ENCODE measurements at regions of chr1 and their contacts with region 1.

Region 1: GRCh38 chr1:151399890-151400495 is 620 bp downstream of the PSMB4 start:
- DNase-seq: no peak
- H3K4me3 ChIP-seq: peak overlapping the region; percentile 74 to 84 (median 82)
- H3K27ac ChIP-seq: peak overlapping the region; percentile 89 to 92 (median 90)
- H3K4me1 ChIP-seq: peaks cover 0 to 18% (median 12%) of the 10 kb centered on the region in 4 donors
- H3K27me3 ChIP-seq: no peaks in the 10 kb centered on the region
- CTCF ChIP-seq: no peak
- EP300 ChIP-seq: no peak
- POLR2A ChIP-seq: no peak

Region 2: DNA sequence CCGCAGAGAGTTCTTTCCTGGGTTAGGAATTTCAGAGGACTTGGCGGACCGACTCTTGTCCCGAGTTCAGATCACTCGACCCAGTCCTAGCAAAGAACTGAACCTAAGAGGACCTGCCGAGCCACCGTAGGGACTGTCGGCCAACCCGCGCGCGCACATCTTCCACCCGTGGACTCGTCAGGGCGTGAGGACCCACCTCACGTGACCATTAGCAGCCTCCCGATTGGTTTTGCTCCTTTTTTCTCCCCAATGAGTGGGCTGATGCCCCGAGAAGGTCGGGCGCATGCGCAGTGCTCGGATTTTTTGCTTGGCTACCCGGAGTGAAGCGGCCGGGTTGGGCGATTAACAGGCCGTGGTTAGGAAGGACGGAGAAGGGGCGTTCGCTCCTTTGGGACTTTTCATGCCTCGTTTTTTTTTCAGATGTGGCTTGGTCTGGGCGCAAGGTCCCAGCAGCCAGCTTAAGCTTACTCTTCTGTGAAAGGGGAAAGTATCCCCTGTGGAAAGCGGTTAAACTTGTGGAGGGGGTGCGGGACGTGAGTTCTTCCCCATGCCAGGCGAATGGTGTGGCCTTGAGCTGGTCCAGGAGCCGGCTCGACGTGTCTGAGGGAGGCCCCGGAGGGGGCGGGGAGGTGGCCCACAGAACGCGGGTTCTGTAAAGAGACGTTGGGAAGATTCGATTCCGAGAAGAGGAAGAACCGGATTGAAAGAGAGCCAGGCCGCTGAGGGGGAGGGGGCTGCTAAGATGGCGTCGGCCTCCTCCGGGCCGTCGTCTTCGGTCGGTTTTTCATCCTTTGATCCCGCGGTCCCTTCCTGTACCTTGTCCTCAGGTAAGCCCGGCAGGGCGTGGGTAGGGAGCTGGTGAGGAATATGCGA is 201.5 kb before region 1 on chr1 and contains the start of gene PIP5K1A:
- intact Hi-C with region 1: loop called (anchors 10 kb)
- DNase-seq: peak; percentile 100
- H3K4me3 ChIP-seq: peak within 1 kb of the TSS; percentile 62 to 88 (median 70)
- H3K27ac ChIP-seq: peak within 1 kb of the TSS; percentile 90 to 95 (median 93)
- H3K4me1 ChIP-seq: peaks cover 0 to 47% (median 38%) of the 10 kb centered on the region in 4 donors
- H3K27me3 ChIP-seq: no peaks in the 10 kb centered on the region
- CTCF ChIP-seq: no peak
- EP300 ChIP-seq: no peak
- POLR2A ChIP-seq: peak; percentile 84 to 93
- total RNA-seq, gene PIP5K1A: 33.2 to 51.5 (median 37.8) TPM

Region 3: DNA sequence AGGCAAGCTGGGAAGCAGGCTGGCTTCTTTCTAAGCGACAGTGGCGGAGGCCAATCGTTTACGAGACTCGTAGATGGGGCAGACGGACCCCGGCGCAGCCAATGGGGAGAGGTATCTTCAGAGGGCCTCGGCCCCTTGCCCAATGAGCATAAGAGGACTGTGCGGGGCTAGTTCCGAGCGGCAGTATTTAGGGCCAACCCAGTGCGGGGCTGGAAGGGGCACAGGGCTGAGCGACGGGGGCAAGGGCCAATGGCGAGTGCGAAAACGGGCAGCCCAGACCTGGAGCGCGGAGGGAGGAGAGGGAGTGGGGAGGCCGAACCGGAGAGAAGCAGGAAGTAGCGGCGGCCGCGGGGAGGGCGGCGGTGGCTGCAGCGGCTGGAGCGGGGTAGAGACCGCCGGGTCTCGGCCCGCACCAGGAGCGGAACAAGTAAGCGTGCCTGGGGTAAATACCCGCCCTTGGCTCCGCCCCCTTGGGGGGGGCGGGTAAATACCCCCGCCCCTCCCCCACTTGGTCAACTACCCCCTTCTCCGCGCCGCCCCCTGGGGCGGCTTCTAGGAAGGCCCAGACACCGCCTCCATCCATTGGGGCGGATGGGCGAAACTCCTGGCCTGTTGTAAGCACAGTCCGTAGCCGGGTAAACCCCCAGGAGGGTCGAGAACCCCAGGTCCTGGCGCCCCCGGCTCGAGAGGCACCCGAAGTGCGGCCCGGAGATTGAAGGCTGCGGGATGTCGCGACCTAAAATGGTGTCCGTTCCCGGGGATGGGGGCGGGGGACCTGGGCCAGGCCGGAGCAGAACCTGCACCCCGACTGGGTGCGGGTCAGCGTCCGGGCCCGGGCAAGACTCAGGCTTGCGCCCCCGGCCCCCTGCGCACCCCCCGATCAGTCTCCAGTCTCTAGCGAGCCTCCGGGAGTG is 117.8 kb before region 1 on chr1 and contains the start of gene ZNF687:
- intact Hi-C with region 1: loop called (anchors 5 kb)
- DNase-seq: peak; percentile 100
- H3K4me3 ChIP-seq: peak within 1 kb of the TSS; percentile 73 to 84 (median 80)
- H3K27ac ChIP-seq: peak within 1 kb of the TSS; percentile 97 to 99 (median 98)
- H3K4me1 ChIP-seq: peaks cover 2 to 22% (median 21%) of the 10 kb centered on the region in 4 donors
- H3K27me3 ChIP-seq: no peaks in the 10 kb centered on the region
- CTCF ChIP-seq: no peak
- EP300 ChIP-seq: no peak
- POLR2A ChIP-seq: peak; percentile 60 to 86
- total RNA-seq, gene ZNF687: 17.6 to 24.2 (median 18.3) TPM

Region 4: GRCh38 chr1:151294742-151295462 is 105.1 kb before region 1 on chr1:
- intact Hi-C with region 1: loop called (anchors 5 kb)
- DNase-seq: no peak
- H3K4me3 ChIP-seq: no peak overlapping the region
- H3K27ac ChIP-seq: no peak overlapping the region
- H3K4me1 ChIP-seq: no peaks in the 10 kb centered on the region
- H3K27me3 ChIP-seq: no peaks in the 10 kb centered on the region
- CTCF ChIP-seq: no peak
- EP300 ChIP-seq: no peak
- POLR2A ChIP-seq: no peak

Region 5: GRCh38 chr1:151327223-151327902 is 72.6 kb before region 1 on chr1 and contains the start of gene PI4KB:
- intact Hi-C with region 1: loop called (anchors 2 kb)
- DNase-seq: peak; percentile 97
- H3K4me3 ChIP-seq: peak within 1 kb of the TSS; percentile 71 to 90 (median 80)
- H3K27ac ChIP-seq: peak within 1 kb of the TSS; percentile 86 to 95 (median 93)
- H3K4me1 ChIP-seq: peaks cover 0 to 37% (median 33%) of the 10 kb centered on the region in 4 donors
- H3K27me3 ChIP-seq: no peaks in the 10 kb centered on the region
- CTCF ChIP-seq: no peak
- EP300 ChIP-seq: no peak
- POLR2A ChIP-seq: peak in 1 of 2 donors; percentile 7
- total RNA-seq, gene PI4KB: 57.6 to 75.2 (median 62.4) TPM

Region 6: GRCh38 chr1:151346769-151347522 is 53.0 kb before region 1 on chr1 and contains the start of gene RFX5:
- intact Hi-C with region 1: loop called (anchors 2 kb)
- DNase-seq: peak; percentile 98
- H3K4me3 ChIP-seq: peak within 1 kb of the TSS; percentile 66 to 87 (median 73)
- H3K27ac ChIP-seq: peak within 1 kb of the TSS; percentile 88 to 94 (median 92)
- H3K4me1 ChIP-seq: peaks cover 0 to 18% (median 11%) of the 10 kb centered on the region in 4 donors
- H3K27me3 ChIP-seq: no peaks in the 10 kb centered on the region
- CTCF ChIP-seq: no peak
- EP300 ChIP-seq: no peak
- POLR2A ChIP-seq: peak; percentile 38 to 54
- total RNA-seq, gene RFX5: 39.6 to 67.9 (median 56.1) TPM

Region 7: GRCh38 chr1:151372061-151372934 is 27.7 kb before region 1 on chr1 and contains the start of gene SELENBP1:
- intact Hi-C with region 1: loop called (anchors 1 kb)
- DNase-seq: peak; percentile 96
- H3K4me3 ChIP-seq: peak within 1 kb of the TSS; percentile 46 to 54 (median 48)
- H3K27ac ChIP-seq: peak within 1 kb of the TSS; percentile 81 to 89 (median 86)
- H3K4me1 ChIP-seq: peaks cover 0 to 48% (median 37%) of the 10 kb centered on the region in 4 donors
- H3K27me3 ChIP-seq: no peaks in the 10 kb centered on the region
- CTCF ChIP-seq: no peak
- EP300 ChIP-seq: no peak
- POLR2A ChIP-seq: peak; percentile 71 to 95
- total RNA-seq, gene SELENBP1: 95.8 to 142 (median 127) TPM

Measured in sigmoid colon (tissue), 7 donors.